OCI-LY7 (cell line): ENCODE measurements at regions of chr14 and their contacts with region 1.

Region 1: GRCh38 chr14:91418387-91419043 is 895 bp upstream of the CCDC88C start:
- DNase-seq: peak; percentile 82
- H3K4me3 ChIP-seq: peak overlapping the region; percentile 89
- H3K27ac ChIP-seq: peak overlapping the region; percentile 87
- H3K4me1 ChIP-seq: peaks cover 32% of the 10 kb centered on the region
- CTCF ChIP-seq: peak; percentile 99

Region 2: GRCh38 chr14:91286530-91286937 is 132.0 kb before region 1 on chr14:
- CTCF ChIA-PET with region 1: no interaction called
- POLR2A ChIA-PET with region 1: no interaction called
- intact Hi-C with region 1: loop called (anchors 1 kb)
- DNase-seq: peak; percentile 80
- H3K4me3 ChIP-seq: no peak overlapping the region
- H3K27ac ChIP-seq: peak overlapping the region; percentile 97
- H3K4me1 ChIP-seq: peaks cover 54% of the 10 kb centered on the region
- CTCF ChIP-seq: peak; percentile 98

Region 3: GRCh38 chr14:91350813-91351511 is 67.6 kb before region 1 on chr14:
- CTCF ChIA-PET with region 1: interaction called, 6 read pairs
- POLR2A ChIA-PET with region 1: interaction called, 196 read pairs
- intact Hi-C with region 1: loop called (anchors 1 kb)
- DNase-seq: peak; percentile 72
- H3K4me3 ChIP-seq: peak overlapping the region; percentile 60
- H3K27ac ChIP-seq: peak overlapping the region; percentile 94
- H3K4me1 ChIP-seq: peaks cover 97% of the 10 kb centered on the region
- CTCF ChIP-seq: no peak

Region 4: DNA sequence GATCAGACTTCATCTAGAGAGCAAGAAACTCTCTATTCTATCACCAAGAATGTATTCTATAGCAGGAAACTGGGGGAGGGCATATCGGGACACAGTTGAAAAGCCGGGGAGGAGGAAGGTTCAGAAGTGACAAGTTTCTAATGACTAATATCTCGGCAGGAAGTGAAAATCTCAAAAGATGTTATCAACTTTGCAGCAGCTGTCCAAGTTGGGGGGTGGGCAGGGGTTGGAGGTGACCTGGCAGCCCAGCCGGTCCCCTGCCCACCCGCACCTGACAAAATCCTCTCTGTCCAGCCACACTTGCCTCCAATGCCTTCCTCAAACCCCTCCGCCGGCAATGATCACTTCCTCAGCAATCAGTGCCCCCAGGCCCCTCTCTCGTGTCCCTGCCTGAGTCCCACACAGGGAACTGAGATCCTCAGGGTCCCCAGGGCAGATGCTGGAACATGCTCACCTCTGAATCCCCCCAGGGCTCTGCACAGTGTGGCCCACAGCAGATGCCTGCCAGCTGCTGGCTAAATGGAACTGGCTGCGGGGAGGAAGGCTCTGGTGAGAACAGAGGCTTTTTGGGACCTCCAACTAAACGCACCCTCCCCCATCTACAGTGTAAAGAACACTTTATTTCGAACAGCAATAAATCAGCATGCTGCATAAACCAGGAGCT is 44.8 kb before region 1 on chr14:
- CTCF ChIA-PET with region 1: interaction called, 3 read pairs
- POLR2A ChIA-PET with region 1: interaction called, 69 read pairs
- intact Hi-C with region 1: loop called (anchors 1 kb)
- DNase-seq: peak; percentile 74
- H3K4me3 ChIP-seq: peak overlapping the region; percentile 60
- H3K27ac ChIP-seq: peak overlapping the region; percentile 94
- H3K4me1 ChIP-seq: peaks cover 100% of the 10 kb centered on the region
- CTCF ChIP-seq: no peak

Region 5: GRCh38 chr14:91396959-91397815 is 21.3 kb before region 1 on chr14:
- CTCF ChIA-PET with region 1: interaction called, 9 read pairs
- POLR2A ChIA-PET with region 1: interaction called, 106 read pairs
- intact Hi-C with region 1: loop called (anchors 1 kb)
- DNase-seq: peak; percentile 87
- H3K4me3 ChIP-seq: peak overlapping the region; percentile 63
- H3K27ac ChIP-seq: peak overlapping the region; percentile 89
- H3K4me1 ChIP-seq: peaks cover 94% of the 10 kb centered on the region
- CTCF ChIP-seq: no peak

Region 6: DNA sequence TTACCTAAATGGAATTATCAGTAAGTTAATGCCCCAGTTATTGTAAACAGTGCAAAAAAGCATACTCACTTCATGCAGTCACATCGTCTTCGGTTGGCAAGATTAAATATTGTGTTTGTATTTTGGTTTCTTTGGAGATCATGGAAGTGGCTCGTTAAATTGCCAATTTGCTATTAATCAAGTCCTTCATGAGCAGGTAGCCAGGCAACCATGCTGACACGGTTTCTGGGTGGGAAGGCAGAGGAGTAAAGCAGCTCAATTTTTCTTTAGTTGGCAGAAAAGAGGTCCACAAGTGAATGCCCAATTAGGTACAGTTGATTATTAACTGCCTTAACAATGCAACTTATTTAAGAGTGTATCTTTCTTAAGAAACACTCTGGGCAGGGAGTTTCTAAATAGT is 47.7 kb after region 1 on chr14:
- CTCF ChIA-PET with region 1: no interaction called
- POLR2A ChIA-PET with region 1: no interaction called
- intact Hi-C with region 1: no loop called
- DNase-seq: no peak
- H3K4me3 ChIP-seq: no peak overlapping the region
- H3K27ac ChIP-seq: no peak overlapping the region
- H3K4me1 ChIP-seq: no peaks in the 10 kb centered on the region
- CTCF ChIP-seq: no peak